ENCODE measurements at regions of chr18 and their contacts with region 1.

Region 1: DNA sequence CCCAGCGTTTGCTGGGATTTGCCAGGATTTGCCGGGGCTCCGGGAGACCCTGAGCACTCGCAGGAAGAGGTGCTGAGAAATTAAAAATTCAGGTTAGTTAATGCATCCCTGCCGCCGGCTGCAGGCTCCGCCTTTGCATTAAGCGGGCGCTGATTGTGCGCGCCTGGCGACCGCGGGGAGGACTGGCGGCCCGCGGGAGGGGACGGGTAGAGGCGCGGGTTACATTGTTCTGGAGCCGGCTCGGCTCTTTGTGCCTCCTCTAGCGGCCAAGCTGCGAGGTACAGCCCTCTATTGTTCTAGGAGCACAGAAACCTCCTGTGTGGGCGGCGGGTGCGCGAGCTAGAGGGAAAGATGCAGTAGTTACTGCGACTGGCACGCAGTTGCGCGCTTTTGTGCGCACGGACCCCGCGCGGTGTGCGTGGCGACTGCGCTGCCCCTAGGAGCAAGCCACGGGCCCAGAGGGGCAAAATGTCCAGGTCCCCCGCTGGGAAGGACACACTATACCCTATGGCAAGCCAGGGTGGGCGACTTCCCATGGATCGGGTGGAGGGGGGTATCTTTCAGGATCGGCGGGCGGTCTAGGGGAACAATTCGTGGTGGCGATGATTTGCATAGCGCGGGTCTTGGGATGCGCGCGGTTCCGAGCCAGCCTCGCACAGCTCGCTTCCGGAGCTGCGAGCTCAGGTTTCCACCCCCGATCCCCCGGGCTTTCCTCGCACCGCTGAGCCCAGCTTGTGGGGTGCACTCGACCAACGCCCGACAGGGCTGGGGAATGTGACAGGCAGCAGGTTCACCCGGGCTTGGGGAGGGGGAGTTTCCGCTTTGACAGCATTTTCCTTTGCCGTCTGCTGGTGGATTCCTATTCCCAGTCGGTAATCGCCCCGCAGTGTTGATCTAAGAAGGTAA is 2.8 kb downstream of the ONECUT2 start:
- DNase-seq: peak; percentile 49 to 82
- ATAC-seq: peak; percentile 81 to 90
- H3K4me3 ChIP-seq: peak overlapping the region; percentile 61
- H3K27ac ChIP-seq: peak overlapping the region in 1 of 2 experiments; percentile 81; a peak in 4 of 6 replicates
- H3K4me1 ChIP-seq: peaks cover 8% of the 10 kb centered on the region; the same call in 2 of the 3 replicates
- CTCF ChIP-seq: peak; percentile 50
- EP300 ChIP-seq: no peak
- POLR2A ChIP-seq: no peak
- RAD21 ChIP-seq: peak; percentile 54 to 61; a peak in 4 of 5 replicates

Region 2: DNA sequence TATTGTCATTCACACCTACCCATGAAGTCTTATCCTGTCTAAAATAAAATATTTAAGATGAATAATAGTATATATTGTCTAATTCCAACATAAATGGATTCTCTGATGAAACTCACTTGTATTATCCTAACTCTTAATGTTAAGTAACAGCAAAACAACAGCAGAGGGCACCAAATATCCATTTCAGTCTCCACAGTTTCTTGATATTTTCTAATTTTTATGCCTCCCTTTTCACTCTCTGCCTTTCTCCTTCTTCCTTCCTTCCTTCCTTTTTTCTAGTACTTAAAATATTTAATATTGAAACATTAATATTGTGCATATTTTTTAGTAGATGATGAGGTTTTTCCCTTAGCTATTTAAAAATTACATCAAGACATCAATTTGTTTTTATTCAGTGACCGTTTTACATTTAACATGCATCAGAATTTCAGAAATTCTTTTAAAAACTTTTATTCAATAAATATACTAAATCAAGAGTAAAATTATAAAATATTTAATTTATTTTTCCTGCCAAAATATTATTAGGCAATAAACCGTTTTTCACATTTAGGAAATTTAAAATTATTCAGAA is 689.2 kb before region 1 on chr18:
- CTCF ChIA-PET with region 1: interaction called, 27 read pairs
- POLR2A ChIA-PET with region 1: no interaction called
- DNase-seq: peak; percentile 7 to 23
- ATAC-seq: no peak
- H3K4me3 ChIP-seq: no peak overlapping the region
- H3K27ac ChIP-seq: no peak overlapping the region
- H3K4me1 ChIP-seq: no peaks in the 10 kb centered on the region
- CTCF ChIP-seq: peak; percentile 68
- EP300 ChIP-seq: no peak
- POLR2A ChIP-seq: no peak
- RAD21 ChIP-seq: peak; percentile 72 to 78

Region 3: GRCh38 chr18:56869189-56869777 is 568.7 kb before region 1 on chr18:
- CTCF ChIA-PET with region 1: interaction called, 32 read pairs
- POLR2A ChIA-PET with region 1: no interaction called
- DNase-seq: peak; percentile 2 to 66
- ATAC-seq: peak; percentile 39 to 62; a peak in 2 of 6 replicates
- H3K4me3 ChIP-seq: no peak overlapping the region
- H3K27ac ChIP-seq: no peak overlapping the region
- H3K4me1 ChIP-seq: no peaks in the 10 kb centered on the region
- CTCF ChIP-seq: peak; percentile 65
- EP300 ChIP-seq: no peak
- POLR2A ChIP-seq: no peak
- RAD21 ChIP-seq: peak; percentile 76 to 78